Endothelial cell of umbilical vein (primary cell): ENCODE measurements at regions of chr4 and their contacts with region 1.

Region 1: DNA sequence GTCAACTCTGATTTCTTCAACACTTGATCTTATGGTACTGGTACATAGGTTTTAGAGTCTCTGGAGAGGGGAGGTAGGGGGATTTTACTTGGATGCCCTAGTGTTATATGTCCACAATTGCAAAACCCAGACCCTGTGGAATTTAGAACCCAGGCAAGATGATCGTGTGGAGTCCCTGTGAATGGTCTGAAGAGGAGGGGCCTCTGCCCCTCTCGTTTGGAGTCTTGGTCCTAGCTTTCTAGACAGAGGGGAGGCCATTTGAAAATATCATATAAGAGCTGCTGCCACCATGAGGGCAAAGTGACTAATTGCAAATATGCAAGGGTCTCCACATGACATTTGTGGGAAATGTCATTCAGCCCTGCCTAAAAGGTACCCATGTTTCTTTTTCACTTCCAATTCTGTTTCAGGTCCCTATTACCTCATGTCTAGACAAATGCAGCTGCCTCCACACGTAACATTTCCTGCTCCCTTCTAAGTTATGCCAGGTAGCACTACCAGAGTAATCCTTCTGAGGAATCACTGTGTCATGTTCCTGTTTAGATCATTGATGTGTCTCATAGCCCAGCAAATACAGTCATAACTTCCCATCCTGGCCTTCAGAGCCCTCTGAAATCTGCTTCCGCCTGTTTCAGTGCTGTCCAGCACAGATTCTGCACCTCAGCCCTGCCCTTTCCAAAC is 126.8 kb downstream of the KLHL8 start:
- DNase-seq: peak; percentile 70
- H3K4me3 ChIP-seq: no peak overlapping the region
- H3K27ac ChIP-seq: peak overlapping the region; percentile 68
- H3K4me1 ChIP-seq: peaks cover 33% of the 10 kb centered on the region
- H3K27me3 ChIP-seq: no peaks in the 10 kb centered on the region
- CTCF ChIP-seq: peak; percentile 35 to 58
- POLR2A ChIP-seq: no peak

Region 2: DNA sequence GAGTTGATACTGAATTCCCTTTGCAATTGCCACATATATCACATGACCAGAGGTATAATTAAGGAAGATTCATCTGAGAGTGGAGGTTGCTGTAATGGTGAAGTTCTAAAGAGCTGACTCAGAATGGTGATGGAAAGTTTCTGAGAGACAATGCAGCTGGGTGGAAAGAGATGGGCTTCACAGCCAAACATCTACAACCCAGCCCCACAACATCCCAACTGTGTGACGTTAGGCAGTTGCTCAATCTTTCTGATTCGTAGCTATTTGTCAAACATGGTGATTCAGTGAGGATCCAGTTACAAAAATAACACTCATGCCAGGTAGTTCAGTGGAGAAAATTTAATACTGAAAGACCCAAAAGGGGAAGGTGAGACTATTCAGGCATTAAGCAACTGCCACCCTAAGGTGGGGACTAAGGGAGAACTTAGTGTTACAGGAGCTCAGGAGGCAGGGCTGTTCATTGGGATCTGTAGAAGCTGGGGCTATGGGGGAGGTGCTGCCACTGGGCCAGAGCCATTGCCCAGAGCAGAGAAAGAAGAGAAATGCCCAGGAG is 165.7 kb before region 1 on chr4:
- CTCF ChIA-PET with region 1: interaction called, 157 read pairs
- POLR2A ChIA-PET with region 1: no interaction called
- dilution Hi-C with region 1: no loop called
- intact Hi-C with region 1: no loop called
- DNase-seq: peak; percentile 43
- H3K4me3 ChIP-seq: no peak overlapping the region
- H3K27ac ChIP-seq: no peak overlapping the region
- H3K4me1 ChIP-seq: peaks cover 29% of the 10 kb centered on the region
- H3K27me3 ChIP-seq: no peaks in the 10 kb centered on the region
- CTCF ChIP-seq: no peak
- POLR2A ChIP-seq: no peak

Region 3: DNA sequence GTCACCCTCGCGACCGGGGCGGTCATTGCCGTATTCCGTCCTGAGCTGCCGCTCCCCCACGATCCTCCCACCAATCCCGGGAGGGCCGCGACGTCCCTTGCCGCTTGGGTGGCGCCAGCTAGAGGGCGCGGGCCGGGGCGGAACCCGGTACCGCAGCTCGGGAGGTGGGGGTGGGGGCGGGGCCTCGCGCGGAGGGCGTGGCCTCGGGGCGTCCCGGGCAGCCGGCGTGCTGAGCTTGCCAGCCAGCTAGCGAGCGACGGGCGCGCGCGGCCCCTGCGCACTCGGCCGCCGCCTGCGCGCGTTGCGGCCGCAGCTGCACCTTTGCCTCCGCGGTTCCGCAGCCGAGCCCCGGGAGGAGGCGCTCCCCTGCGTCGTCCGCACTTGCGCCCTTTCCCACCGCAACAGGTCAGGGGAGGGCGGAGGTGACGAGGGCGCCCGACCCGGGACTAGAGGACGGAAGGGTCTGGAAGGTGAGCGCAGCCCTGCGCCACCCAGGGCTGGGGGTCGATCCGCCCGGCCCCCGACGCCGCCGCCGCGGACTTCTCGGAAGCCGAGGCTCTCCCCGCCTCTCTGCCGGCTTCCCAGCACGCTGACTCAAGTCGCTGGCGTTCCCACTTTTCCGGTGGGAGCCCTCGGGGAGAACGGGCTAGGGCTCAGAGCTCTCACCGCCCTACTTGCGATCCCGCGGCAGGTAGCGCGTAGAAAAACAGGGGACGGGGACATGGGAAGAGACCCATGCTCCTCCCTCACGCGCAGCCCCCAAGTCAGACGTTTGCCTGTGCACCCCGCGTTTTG is 158.6 kb before region 1 on chr4 and contains the start of gene AFF1:
- CTCF ChIA-PET with region 1: interaction called, 35 read pairs
- POLR2A ChIA-PET with region 1: no interaction called
- dilution Hi-C with region 1: no loop called
- intact Hi-C with region 1: loop called (anchors 1 kb)
- DNase-seq: peak; percentile 93
- H3K4me3 ChIP-seq: peak within 1 kb of the TSS; percentile 59 to 86 (median 84)
- H3K27ac ChIP-seq: peak within 1 kb of the TSS; percentile 89
- H3K4me1 ChIP-seq: peaks cover 42% of the 10 kb centered on the region
- H3K27me3 ChIP-seq: no peaks in the 10 kb centered on the region
- CTCF ChIP-seq: peak; percentile 15 to 28
- POLR2A ChIP-seq: peak; percentile 91
- total RNA-seq, gene AFF1: 80.7 and 106 TPM in 2 replicates

Region 4: GRCh38 chr4:87032884-87033533 is 60.6 kb before region 1 on chr4:
- CTCF ChIA-PET with region 1: interaction called, 15 read pairs
- POLR2A ChIA-PET with region 1: no interaction called
- dilution Hi-C with region 1: no loop called
- intact Hi-C with region 1: loop called (anchors 2 kb)
- DNase-seq: peak; percentile 94
- H3K4me3 ChIP-seq: peak overlapping the region in 1 of 3 experiments; percentile 13
- H3K27ac ChIP-seq: peak overlapping the region; percentile 19
- H3K4me1 ChIP-seq: peaks cover 63% of the 10 kb centered on the region
- H3K27me3 ChIP-seq: no peaks in the 10 kb centered on the region
- CTCF ChIP-seq: no peak
- POLR2A ChIP-seq: peak; percentile 33

Region 5: GRCh38 chr4:87038837-87039615 is 54.6 kb before region 1 on chr4:
- CTCF ChIA-PET with region 1: interaction called, 15 read pairs
- POLR2A ChIA-PET with region 1: no interaction called
- dilution Hi-C with region 1: no loop called
- intact Hi-C with region 1: loop called (anchors 2 kb)
- DNase-seq: peak; percentile 88
- H3K4me3 ChIP-seq: no peak overlapping the region
- H3K27ac ChIP-seq: peak overlapping the region; percentile 61
- H3K4me1 ChIP-seq: peaks cover 42% of the 10 kb centered on the region
- H3K27me3 ChIP-seq: no peaks in the 10 kb centered on the region
- CTCF ChIP-seq: no peak
- POLR2A ChIP-seq: no peak

Region 6: DNA sequence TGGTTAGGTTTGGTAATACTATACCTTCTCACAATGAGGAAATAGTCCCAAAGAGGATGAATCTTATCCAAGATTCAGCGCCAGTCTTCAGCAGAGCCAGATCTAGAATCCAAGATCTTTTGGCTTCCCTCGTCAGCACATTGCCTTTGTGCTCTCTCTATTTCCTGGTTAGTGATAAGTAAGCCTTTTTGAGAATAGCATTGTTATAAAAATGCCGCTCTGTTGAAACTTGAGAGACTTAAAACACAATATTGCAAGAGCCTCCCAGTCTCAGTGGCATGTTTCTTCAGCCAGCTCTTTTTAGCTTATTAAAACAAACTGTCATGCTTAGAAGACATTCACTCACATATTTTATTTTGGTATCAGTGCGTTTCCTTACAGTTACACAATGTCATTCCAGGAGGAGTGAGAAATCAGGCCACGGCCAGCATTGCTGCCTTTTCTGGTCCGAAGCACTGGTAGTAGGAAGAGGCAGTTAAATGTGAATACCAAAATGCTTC is 14.5 kb before region 1 on chr4:
- CTCF ChIA-PET with region 1: interaction called, 17 read pairs
- POLR2A ChIA-PET with region 1: no interaction called
- dilution Hi-C with region 1: no loop called
- intact Hi-C with region 1: no loop called
- DNase-seq: peak; percentile 71
- H3K4me3 ChIP-seq: no peak overlapping the region
- H3K27ac ChIP-seq: peak overlapping the region; percentile 16
- H3K4me1 ChIP-seq: peaks cover 21% of the 10 kb centered on the region
- H3K27me3 ChIP-seq: no peaks in the 10 kb centered on the region
- CTCF ChIP-seq: no peak
- POLR2A ChIP-seq: no peak

Region 7: DNA sequence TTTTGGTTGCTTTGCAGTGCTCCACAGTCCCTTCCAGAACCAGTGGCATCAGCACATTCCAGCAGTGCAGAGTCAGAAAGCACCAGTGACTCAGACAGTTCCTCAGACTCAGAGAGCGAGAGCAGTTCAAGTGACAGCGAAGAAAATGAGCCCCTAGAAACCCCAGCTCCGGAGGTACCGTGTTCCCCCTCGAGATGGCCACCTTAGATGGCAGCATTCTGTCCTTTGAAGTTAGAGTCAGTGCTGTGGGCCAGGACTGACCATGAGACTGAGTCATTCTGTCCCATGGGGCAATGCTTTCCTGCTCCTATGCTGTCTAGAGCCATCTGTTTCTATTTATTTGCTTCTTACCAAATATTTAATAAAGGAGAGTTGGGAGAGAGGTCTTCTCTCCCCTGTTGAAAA is 14.6 kb after region 1 on chr4:
- CTCF ChIA-PET with region 1: interaction called, 10 read pairs
- POLR2A ChIA-PET with region 1: no interaction called
- dilution Hi-C with region 1: no loop called
- intact Hi-C with region 1: no loop called
- DNase-seq: peak; percentile 58
- H3K4me3 ChIP-seq: no peak overlapping the region
- H3K27ac ChIP-seq: peak overlapping the region; percentile 60
- H3K4me1 ChIP-seq: peaks cover 40% of the 10 kb centered on the region
- H3K27me3 ChIP-seq: no peaks in the 10 kb centered on the region
- CTCF ChIP-seq: no peak
- POLR2A ChIP-seq: no peak

Region 8: DNA sequence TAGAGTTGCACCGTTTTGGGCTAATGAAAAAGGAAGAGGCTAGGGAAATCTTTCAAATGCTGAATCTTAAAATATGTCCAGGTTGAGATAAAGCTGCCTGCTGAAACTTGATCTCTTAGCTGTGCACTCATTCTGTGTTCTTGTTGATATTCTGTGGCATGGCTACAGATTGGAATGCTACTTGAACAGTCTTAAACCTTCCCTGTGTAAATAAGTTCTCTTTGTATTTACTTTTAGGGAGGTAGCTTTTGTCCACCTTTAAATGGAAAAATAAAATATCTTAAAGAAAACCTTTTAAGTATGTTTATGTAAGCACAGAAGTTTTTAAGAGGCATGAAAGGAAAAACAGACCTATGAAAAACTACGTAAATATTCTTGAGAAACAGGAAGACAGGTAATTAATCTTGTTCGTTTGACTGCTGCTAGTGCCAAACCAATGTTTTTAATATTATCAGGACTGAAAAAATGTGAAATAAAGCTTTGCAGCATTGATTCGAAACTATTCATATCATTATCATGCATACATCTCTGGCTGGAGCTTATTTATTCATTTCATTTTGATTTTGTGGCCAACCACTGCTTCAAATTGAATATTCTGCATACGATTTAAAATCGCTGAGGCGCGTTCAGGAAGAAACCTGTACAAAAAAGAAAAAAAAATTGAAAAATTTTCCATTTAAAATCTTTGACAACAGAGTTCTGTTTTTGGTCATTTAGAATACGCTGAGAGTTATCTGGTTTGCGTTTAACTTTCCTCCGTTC is 211.3 kb after region 1 on chr4:
- CTCF ChIA-PET with region 1: no interaction called
- POLR2A ChIA-PET with region 1: no interaction called
- dilution Hi-C with region 1: no loop called
- intact Hi-C with region 1: no loop called
- DNase-seq: peak; percentile 41
- H3K4me3 ChIP-seq: no peak overlapping the region
- H3K27ac ChIP-seq: no peak overlapping the region
- H3K4me1 ChIP-seq: no peaks in the 10 kb centered on the region
- H3K27me3 ChIP-seq: peaks cover 0 to 2% of the 10 kb centered on the region in 2 experiments
- CTCF ChIP-seq: no peak
- POLR2A ChIP-seq: no peak